OCI-LY7 (cell line): ENCODE measurements at regions of chr11 and their contacts with region 1.

Region 1: DNA sequence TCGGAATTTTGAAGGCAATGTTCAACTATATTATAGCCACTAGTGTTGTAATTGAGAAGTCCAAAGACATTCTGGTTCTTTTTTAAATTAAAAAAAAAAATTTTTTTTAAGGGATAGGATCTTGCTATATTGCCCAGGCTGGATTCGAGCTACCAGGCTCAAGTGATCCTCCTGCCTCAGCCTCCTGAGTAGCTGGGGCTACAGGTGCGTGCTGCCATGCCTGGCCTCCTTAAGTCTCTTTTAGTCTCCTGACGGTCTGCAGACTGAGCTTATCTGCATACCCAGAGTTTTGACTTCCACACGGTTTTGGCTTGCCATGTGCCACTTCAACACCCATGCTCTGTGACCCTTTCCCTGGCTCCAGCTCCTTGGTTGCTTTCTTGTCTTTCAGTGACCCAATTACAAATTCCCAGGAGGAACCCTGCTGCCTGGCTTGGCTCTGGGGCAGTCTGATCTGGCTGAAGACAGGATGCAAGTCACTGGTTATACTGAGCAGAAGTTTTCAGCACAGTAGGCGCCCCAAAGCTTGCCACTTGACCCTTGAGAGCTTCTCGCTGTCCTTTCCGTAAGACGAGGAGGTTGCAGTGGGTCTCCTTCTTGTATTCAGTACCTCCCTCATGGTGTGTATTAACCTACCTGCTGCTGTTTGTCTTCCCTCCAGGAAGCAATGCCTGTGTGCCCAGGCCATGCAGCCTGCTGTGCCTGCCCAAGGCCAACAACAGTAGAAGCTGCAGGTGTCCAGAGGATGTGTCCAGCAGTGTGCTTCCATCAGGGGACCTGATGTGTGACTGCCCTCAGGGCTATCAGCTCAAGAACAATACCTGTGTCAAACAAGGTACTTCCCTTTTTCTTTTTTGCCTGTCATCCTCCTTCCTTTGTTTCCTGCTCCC is 113.8 kb upstream of the SORL1-AS1 start:
- DNase-seq: peak; percentile 49
- H3K4me3 ChIP-seq: no peak overlapping the region
- H3K27ac ChIP-seq: peak overlapping the region; percentile 97
- H3K4me1 ChIP-seq: peaks cover 75% of the 10 kb centered on the region
- CTCF ChIP-seq: no peak

Region 2: DNA sequence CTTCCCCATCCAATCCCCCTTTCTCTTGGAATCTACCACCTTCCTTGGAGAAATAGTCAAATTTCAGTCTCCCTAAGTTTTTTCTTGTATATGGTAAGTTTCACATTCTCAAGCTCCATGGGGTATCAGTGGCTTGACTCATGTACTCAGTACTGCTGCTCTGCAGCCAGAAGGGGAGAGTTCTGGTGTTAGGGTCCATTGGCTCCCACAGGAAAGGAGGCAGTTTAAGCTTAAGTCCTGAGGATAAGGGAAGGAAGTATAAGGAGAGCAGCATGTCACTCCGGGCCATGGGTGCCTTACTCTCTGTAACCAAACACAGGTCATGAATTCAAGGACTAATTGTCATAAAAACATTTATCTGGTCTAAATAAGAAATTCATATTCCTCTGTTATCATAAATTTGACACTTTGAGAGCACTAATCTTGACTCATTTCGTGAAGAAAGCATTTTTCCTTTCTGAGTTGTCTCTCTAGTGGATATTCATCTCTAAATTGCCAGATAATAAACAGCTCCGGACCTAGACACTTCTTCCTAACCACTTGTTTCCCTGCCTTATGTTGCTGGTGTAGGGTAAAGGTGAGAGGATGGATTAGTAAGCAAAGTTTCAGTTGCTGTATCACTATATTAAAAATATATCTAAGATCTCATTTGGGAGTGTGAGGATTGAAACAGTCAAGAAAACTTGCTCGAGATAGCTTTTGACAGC is 134.6 kb before region 1 on chr11:
- CTCF ChIA-PET with region 1: no interaction called
- POLR2A ChIA-PET with region 1: interaction called, 3 read pairs
- intact Hi-C with region 1: loop called (anchors 2 kb)
- DNase-seq: peak; percentile 26
- H3K4me3 ChIP-seq: peak overlapping the region; percentile 37
- H3K27ac ChIP-seq: peak overlapping the region; percentile 99
- H3K4me1 ChIP-seq: peaks cover 99% of the 10 kb centered on the region
- CTCF ChIP-seq: no peak

Region 3: GRCh38 chr11:121547574-121547973 is 18.9 kb before region 1 on chr11:
- CTCF ChIA-PET with region 1: no interaction called
- POLR2A ChIA-PET with region 1: interaction called, 12 read pairs
- intact Hi-C with region 1: no loop called
- DNase-seq: no peak
- H3K4me3 ChIP-seq: no peak overlapping the region
- H3K27ac ChIP-seq: no peak overlapping the region
- H3K4me1 ChIP-seq: peaks cover 27% of the 10 kb centered on the region
- CTCF ChIP-seq: no peak